Heart left ventricle (tissue), 16 donors: ENCODE measurements at regions of chr17 and their contacts with region 1.

Region 1: DNA sequence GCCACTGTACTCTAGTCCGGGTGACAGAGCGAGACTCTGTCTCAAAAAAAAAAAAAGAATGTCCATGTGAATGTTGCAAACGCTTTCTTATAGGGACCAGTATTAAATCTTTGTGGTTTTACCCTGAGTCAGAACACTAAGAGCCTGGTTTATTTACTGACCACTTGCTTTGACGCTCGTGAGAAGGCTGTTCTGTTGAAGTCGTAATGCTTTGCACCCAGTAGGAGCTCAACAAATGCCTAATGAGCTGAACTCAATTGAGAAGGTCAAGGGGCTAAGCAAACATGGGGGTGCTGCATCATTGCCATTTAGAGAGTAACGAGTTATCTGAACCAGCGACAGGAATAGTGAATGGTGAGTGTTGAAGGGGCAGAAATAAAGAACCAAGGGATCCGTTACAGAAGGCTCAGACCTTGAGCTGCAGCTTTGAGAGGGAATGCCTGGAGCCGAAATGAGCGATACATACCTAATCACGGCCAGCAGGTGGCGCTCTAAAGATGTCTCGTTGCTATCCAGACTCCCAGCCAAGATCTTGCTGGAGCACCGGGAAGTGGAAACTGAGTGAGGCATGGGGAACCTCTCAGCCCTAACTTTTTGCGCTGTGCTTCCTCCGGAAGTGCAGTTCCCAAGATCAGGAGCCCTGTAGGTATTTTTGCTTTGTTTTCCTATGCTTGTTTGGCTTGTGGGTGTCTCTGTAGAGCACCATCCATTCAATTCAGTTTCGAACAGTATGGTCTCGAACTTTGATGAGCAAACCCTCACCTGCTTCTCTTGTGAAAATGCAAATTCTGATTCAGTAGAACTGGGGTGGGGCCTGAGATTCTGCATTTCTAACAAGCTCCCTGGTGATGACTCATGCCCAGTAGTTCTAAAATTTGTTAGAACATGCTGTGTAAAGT is 12.6 kb upstream of the RNF222 start:
- DNase-seq: peak; percentile 86 to 92 (median 88)
- ATAC-seq: peak; percentile 83 to 96 (median 94)
- H3K4me3 ChIP-seq: no peak overlapping the region
- H3K27ac ChIP-seq: no peak overlapping the region
- H3K4me1 ChIP-seq: peaks cover 0 to 10% (median 2%) of the 10 kb centered on the region in 12 donors
- H3K27me3 ChIP-seq: no peaks in the 10 kb centered on the region
- CTCF ChIP-seq: peak; percentile 85 to 93 (median 88)
- POLR2A ChIP-seq: no peak

Region 2: DNA sequence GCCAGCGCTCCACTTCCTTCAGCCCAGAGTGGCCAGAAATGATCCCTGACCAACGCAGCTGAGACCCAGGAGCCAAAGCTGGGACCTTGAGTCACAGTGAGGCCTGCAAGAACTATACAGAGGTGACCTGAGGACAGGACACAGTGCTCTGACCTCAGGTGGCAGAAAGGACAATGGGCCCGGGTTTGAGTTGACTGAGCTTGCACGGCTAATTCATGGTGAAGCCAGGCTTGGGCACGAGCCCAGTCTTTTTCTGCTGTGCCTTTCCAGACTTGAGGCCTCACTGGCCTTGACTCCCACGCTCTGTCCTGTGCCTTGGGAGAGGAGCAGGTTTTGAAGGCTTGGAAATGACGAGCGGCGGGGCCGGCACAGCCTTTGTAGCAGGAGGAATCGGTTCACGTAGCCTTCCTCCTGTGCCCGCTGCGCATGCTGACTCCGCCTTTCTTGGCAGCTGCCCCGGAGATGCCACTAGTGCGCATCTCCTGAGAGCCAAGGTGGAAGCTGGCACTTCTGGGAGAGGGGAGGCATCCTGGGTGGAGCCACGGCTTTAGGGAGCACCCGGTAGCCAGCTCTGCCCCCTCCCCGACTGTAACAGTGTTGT is 60.3 kb after region 1 on chr17:
- intact Hi-C with region 1: loop called in 3 of 10 experiments (anchors 5 to 10 kb)
- DNase-seq: peak; percentile 47 to 78 (median 70)
- ATAC-seq: peak; percentile 14 to 54 (median 50)
- H3K4me3 ChIP-seq: peak overlapping the region in 1 of 12 donors; percentile 18
- H3K27ac ChIP-seq: peak overlapping the region in 11 of 12 donors; percentile 1 to 53 (median 34)
- H3K4me1 ChIP-seq: peaks cover 0 to 52% (median 18%) of the 10 kb centered on the region in 12 donors
- H3K27me3 ChIP-seq: no peaks in the 10 kb centered on the region
- CTCF ChIP-seq: no peak
- POLR2A ChIP-seq: no peak

Region 3: GRCh38 chr17:8488901-8489300 is 78.7 kb after region 1 on chr17:
- intact Hi-C with region 1: loop called in 2 of 10 experiments (anchors 5 kb)
- DNase-seq: peak in 3 of 5 donors; percentile 52 to 70 (median 68)
- ATAC-seq: peak; percentile 71 to 89 (median 86)
- H3K4me3 ChIP-seq: no peak overlapping the region
- H3K27ac ChIP-seq: peak overlapping the region in 2 of 12 donors; percentile 4 to 13
- H3K4me1 ChIP-seq: peaks cover 0 to 4% (median 0%) of the 10 kb centered on the region in 12 donors
- H3K27me3 ChIP-seq: no peaks in the 10 kb centered on the region
- CTCF ChIP-seq: peak in 2 of 12 donors; percentile 13 to 23
- POLR2A ChIP-seq: no peak

Region 4: GRCh38 chr17:8745586-8746500 is 335.6 kb after region 1 on chr17:
- intact Hi-C with region 1: loop called in 9 of 10 experiments (anchors 1 to 5 kb)
- DNase-seq: peak; percentile 69 to 90 (median 73)
- ATAC-seq: peak; percentile 67 to 95 (median 92)
- H3K4me3 ChIP-seq: peak overlapping the region; percentile 50 to 82 (median 64)
- H3K27ac ChIP-seq: peak overlapping the region in 8 of 12 donors; percentile 0 to 68 (median 48)
- H3K4me1 ChIP-seq: peaks cover 0 to 15% (median 4%) of the 10 kb centered on the region in 12 donors
- H3K27me3 ChIP-seq: no peaks in the 10 kb centered on the region
- CTCF ChIP-seq: peak; percentile 84 to 98 (median 96)
- POLR2A ChIP-seq: no peak

Region 5: GRCh38 chr17:8785547-8786413 is 375.6 kb after region 1 on chr17:
- intact Hi-C with region 1: loop called in 9 of 10 experiments (anchors 1 to 10 kb)
- DNase-seq: peak; percentile 68 to 83 (median 76)
- ATAC-seq: peak in 3 of 4 donors; percentile 91 to 92 (median 91)
- H3K4me3 ChIP-seq: no peak overlapping the region
- H3K27ac ChIP-seq: no peak overlapping the region
- H3K4me1 ChIP-seq: peaks cover 0 to 20% (median 0%) of the 10 kb centered on the region in 12 donors
- H3K27me3 ChIP-seq: no peaks in the 10 kb centered on the region
- CTCF ChIP-seq: peak; percentile 72 to 91 (median 88)
- POLR2A ChIP-seq: no peak